ENCODE measurements at regions of chr4 and their contacts with region 1.

Region 1: GRCh38 chr4:242121-242848 is 63.0 kb downstream of the ZNF732 start:
- DNase-seq: peak; percentile 40 to 88 (median 59)
- ATAC-seq: peak; percentile 95
- H3K4me3 ChIP-seq: peak overlapping the region; percentile 54
- H3K4me3 Mint-ChIP-seq: peak overlapping the region; percentile 89
- H3K27ac ChIP-seq: peak overlapping the region in 1 of 2 donors; percentile 29
- H3K27ac Mint-ChIP-seq: peak overlapping the region; percentile 54
- H3K4me1 ChIP-seq: peaks cover 6% of the 10 kb centered on the region
- H3K4me1 Mint-ChIP-seq: peaks cover 11% of the 10 kb centered on the region
- H3K27me3 ChIP-seq: no peaks in the 10 kb centered on the region
- H3K27me3 Mint-ChIP-seq: no peaks in the 10 kb centered on the region
- CTCF ChIP-seq: peak; percentile 91

Region 2: DNA sequence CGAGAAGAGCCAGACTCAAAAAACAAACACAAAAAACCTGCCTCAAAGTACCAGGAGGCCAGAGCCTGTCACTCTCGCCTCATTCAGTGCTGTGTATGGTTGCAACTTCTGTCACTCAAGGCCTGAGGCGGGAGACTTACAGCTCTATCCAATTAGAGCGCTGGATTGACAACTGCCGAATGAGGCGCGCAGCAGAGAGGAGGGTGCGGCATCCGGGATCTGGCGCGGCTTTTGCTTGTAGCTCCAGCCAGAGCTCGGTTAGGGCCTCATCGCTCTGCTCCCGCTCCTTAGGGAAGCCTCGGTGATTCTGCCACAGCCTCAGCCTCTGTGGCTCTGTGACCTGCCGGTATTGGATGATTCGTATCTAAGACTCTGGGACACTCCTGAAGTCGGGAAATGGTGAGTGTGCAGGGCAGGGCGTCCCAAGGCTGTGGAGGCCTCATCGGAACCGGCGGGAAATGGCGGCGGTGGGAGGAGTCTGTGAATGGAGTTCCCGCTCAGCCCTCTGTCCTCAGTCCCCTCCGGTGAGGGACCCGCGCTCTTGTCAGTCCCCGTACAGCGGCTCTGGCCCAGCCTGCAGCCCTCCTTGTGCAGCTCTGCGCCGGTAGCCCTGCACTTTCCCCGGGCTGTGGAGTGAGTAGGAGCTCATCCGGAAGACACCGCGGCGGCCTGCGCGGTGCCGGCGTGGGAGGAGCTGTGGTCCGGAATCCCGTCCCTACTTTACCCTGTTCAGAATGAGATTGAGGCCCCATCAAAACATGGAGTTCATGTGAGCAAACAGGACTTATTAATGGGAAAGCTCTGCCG is 117.8 kb before region 1 on chr4 and contains the start of gene ZNF718:
- CTCF ChIA-PET with region 1: no interaction called
- POLR2A ChIA-PET with region 1: interaction called, 10 read pairs
- intact Hi-C with region 1: loop called in 1 of 2 experiments (anchors 2 kb)
- DNase-seq: peak; percentile 77 to 96 (median 87)
- ATAC-seq: peak; percentile 94
- H3K4me3 ChIP-seq: peak within 1 kb of the TSS; percentile 90
- H3K4me3 Mint-ChIP-seq: peak within 1 kb of the TSS; percentile 99
- H3K27ac ChIP-seq: peak within 1 kb of the TSS; percentile 79 to 88
- H3K27ac Mint-ChIP-seq: peak within 1 kb of the TSS; percentile 98
- H3K4me1 ChIP-seq: peaks cover 48% of the 10 kb centered on the region
- H3K4me1 Mint-ChIP-seq: peaks cover 57% of the 10 kb centered on the region
- H3K27me3 ChIP-seq: no peaks in the 10 kb centered on the region
- H3K27me3 Mint-ChIP-seq: no peaks in the 10 kb centered on the region
- CTCF ChIP-seq: no peak
- total RNA-seq, gene ZNF718: 6.3 to 7.4 TPM

Region 3: DNA sequence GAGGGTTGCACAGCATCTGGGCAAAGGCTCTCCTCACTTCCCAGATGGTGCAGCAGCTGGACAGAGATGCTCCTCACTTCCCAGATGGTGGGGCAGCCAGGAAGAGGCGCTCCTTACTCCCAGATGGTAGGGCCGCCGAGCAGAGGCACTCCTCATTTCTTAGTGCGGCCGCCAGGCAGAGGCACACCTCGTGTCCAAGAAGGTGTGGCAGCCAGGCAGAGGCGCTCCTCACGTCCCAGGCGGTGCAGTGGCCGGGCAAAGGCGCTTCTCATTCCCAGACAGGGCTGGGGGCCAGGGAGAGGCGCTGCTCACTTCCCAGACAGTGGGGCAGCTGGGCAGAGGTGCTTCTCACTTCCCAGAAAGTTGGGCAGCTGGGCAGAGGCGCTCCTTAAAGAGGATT is 14.2 kb after region 1 on chr4:
- CTCF ChIA-PET with region 1: no interaction called
- POLR2A ChIA-PET with region 1: no interaction called
- intact Hi-C with region 1: no loop called
- DNase-seq: no peak
- ATAC-seq: no peak
- H3K4me3 ChIP-seq: no peak overlapping the region
- H3K4me3 Mint-ChIP-seq: no peak overlapping the region
- H3K27ac ChIP-seq: no peak overlapping the region
- H3K27ac Mint-ChIP-seq: no peak overlapping the region
- H3K4me1 ChIP-seq: no peaks in the 10 kb centered on the region
- H3K4me1 Mint-ChIP-seq: no peaks in the 10 kb centered on the region
- H3K27me3 ChIP-seq: no peaks in the 10 kb centered on the region
- H3K27me3 Mint-ChIP-seq: no peaks in the 10 kb centered on the region
- CTCF ChIP-seq: no peak

Region 4: DNA sequence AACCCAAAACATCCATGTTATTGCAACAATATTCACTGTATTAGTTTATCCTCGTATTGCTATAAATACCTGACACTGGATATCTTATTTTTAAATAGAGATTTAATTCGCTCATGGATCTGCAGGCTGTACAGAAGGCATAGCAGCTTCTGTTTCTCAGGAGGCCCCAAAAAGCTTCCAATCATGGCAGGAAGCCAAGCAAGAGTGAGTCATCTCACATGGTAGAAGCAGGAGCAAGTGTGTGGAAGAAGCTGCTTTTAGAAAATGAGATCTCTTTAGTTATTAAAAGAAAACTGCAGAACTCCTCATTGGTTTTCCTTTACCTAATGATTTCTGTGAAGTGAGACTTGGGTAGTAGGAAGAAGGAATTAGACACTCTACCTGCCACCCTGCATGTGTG is 46.6 kb after region 1 on chr4:
- CTCF ChIA-PET with region 1: no interaction called
- POLR2A ChIA-PET with region 1: no interaction called
- intact Hi-C with region 1: no loop called
- DNase-seq: no peak
- ATAC-seq: no peak
- H3K4me3 ChIP-seq: no peak overlapping the region
- H3K4me3 Mint-ChIP-seq: no peak overlapping the region
- H3K27ac ChIP-seq: no peak overlapping the region
- H3K27ac Mint-ChIP-seq: no peak overlapping the region
- H3K4me1 ChIP-seq: no peaks in the 10 kb centered on the region
- H3K4me1 Mint-ChIP-seq: no peaks in the 10 kb centered on the region
- H3K27me3 ChIP-seq: no peaks in the 10 kb centered on the region
- H3K27me3 Mint-ChIP-seq: peaks cover 6% of the 10 kb centered on the region
- CTCF ChIP-seq: no peak

Region 5: GRCh38 chr4:498328-498904 is 256.1 kb after region 1 on chr4:
- CTCF ChIA-PET with region 1: no interaction called
- POLR2A ChIA-PET with region 1: no interaction called
- intact Hi-C with region 1: loop called in 1 of 2 experiments (anchors 10 kb)
- DNase-seq: peak in 2 of 14 experiments; percentile 39 to 51
- ATAC-seq: peak; percentile 45
- H3K4me3 ChIP-seq: peak overlapping the region; percentile 85
- H3K4me3 Mint-ChIP-seq: peak overlapping the region; percentile 92
- H3K27ac ChIP-seq: peak overlapping the region; percentile 76 to 87
- H3K27ac Mint-ChIP-seq: peak overlapping the region; percentile 91
- H3K4me1 ChIP-seq: peaks cover 28% of the 10 kb centered on the region
- H3K4me1 Mint-ChIP-seq: peaks cover 49% of the 10 kb centered on the region
- H3K27me3 ChIP-seq: no peaks in the 10 kb centered on the region
- H3K27me3 Mint-ChIP-seq: no peaks in the 10 kb centered on the region
- CTCF ChIP-seq: no peak

Region 6: GRCh38 chr4:742742-743311 is 500.5 kb after region 1 on chr4:
- CTCF ChIA-PET with region 1: interaction called, 3 read pairs
- POLR2A ChIA-PET with region 1: no interaction called
- intact Hi-C with region 1: loop called in 1 of 2 experiments (anchors 10 kb)
- DNase-seq: peak; percentile 62 to 84 (median 74)
- ATAC-seq: peak; percentile 83
- H3K4me3 ChIP-seq: no peak overlapping the region
- H3K4me3 Mint-ChIP-seq: no peak overlapping the region
- H3K27ac ChIP-seq: no peak overlapping the region
- H3K27ac Mint-ChIP-seq: no peak overlapping the region
- H3K4me1 ChIP-seq: peaks cover 6% of the 10 kb centered on the region
- H3K4me1 Mint-ChIP-seq: no peaks in the 10 kb centered on the region
- H3K27me3 ChIP-seq: no peaks in the 10 kb centered on the region
- H3K27me3 Mint-ChIP-seq: no peaks in the 10 kb centered on the region
- CTCF ChIP-seq: peak; percentile 88

Region 7: GRCh38 chr4:986879-987623 is 744.8 kb after region 1 on chr4 and contains the start of gene IDUA:
- CTCF ChIA-PET with region 1: no interaction called
- POLR2A ChIA-PET with region 1: no interaction called
- intact Hi-C with region 1: loop called (anchors 10 kb)
- DNase-seq: peak; percentile 73 to 93 (median 86)
- ATAC-seq: peak; percentile 84
- H3K4me3 ChIP-seq: peak within 1 kb of the TSS; percentile 78
- H3K4me3 Mint-ChIP-seq: peak within 1 kb of the TSS; percentile 94
- H3K27ac ChIP-seq: peak within 1 kb of the TSS; percentile 41 to 46
- H3K27ac Mint-ChIP-seq: peak within 1 kb of the TSS; percentile 82
- H3K4me1 ChIP-seq: peaks cover 36% of the 10 kb centered on the region
- H3K4me1 Mint-ChIP-seq: peaks cover 25% of the 10 kb centered on the region
- H3K27me3 ChIP-seq: no peaks in the 10 kb centered on the region
- H3K27me3 Mint-ChIP-seq: no peaks in the 10 kb centered on the region
- CTCF ChIP-seq: peak; percentile 57
- total RNA-seq, gene IDUA: 70.2 to 77.8 TPM

Region 8: DNA sequence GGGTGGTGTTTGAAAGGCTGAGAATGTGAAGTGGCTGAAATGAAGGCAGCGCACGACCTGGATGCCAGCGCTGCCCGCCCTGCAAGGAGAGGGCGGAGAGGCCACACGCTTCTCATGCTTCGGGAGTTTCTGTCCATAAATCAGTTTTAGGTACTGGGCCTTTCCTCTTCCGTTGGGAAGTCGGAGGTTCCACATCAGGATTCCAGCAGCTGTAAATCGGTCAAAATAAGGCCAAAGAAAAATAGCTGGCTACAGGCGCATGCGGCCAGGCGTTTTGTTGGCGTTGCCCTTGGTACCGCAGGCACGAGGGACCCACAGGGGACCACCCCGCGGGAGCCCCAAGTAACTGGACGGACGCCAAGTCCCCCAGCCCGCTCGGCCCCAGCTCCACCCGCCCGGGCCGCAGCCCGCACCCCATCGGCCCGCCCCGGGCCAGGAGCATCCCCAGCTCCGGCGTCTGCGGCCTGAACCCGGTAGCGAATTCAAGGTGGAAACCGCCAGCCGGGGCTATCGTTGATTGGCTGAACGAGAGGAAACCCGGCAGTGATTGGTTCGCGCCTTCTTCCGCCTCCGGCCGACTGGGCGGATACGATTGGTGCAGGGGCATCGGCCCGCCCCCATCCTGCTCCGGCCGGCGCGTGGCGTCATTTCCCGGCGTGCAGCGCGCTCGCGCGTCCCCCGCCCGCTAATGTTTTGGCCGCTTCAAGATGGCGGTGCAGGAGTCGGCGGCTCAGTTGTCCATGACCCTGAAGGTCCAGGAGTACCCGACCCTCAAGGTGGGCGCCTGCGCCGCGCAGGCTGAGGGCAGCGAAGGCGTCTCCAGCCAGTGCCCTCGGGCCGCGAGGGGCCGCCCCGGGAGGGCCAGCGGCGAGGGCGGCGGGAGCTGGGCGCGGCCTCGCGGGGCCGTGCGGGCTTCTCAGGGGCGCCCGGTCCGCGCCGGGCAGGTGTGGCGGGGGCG is 1047.2 kb after region 1 on chr4 and contains the start of gene MAEA:
- CTCF ChIA-PET with region 1: no interaction called
- POLR2A ChIA-PET with region 1: no interaction called
- intact Hi-C with region 1: loop called in 1 of 2 experiments (anchors 10 kb)
- DNase-seq: peak; percentile 94 to 98 (median 96)
- ATAC-seq: peak; percentile 99
- H3K4me3 ChIP-seq: peak within 1 kb of the TSS; percentile 73
- H3K4me3 Mint-ChIP-seq: peak within 1 kb of the TSS; percentile 93
- H3K27ac ChIP-seq: peak within 1 kb of the TSS; percentile 60 to 83
- H3K27ac Mint-ChIP-seq: peak within 1 kb of the TSS; percentile 93
- H3K4me1 ChIP-seq: peaks cover 46% of the 10 kb centered on the region
- H3K4me1 Mint-ChIP-seq: peaks cover 45% of the 10 kb centered on the region
- H3K27me3 ChIP-seq: no peaks in the 10 kb centered on the region
- H3K27me3 Mint-ChIP-seq: no peaks in the 10 kb centered on the region
- CTCF ChIP-seq: no peak
- total RNA-seq, gene MAEA: 61.5 to 63.2 TPM

Region 9: GRCh38 chr4:1721004-1721665 is 1478.8 kb after region 1 on chr4 and contains the starts of genes TACC3 and TMEM129:
- CTCF ChIA-PET with region 1: no interaction called
- POLR2A ChIA-PET with region 1: no interaction called
- intact Hi-C with region 1: no loop called
- DNase-seq: peak; percentile 90 to 99 (median 95)
- ATAC-seq: peak; percentile 80
- H3K4me3 ChIP-seq: peak within 1 kb of the TSS; percentile 53
- H3K4me3 Mint-ChIP-seq: peak within 1 kb of the TSS; percentile 92
- H3K27ac ChIP-seq: peak within 1 kb of the TSS; percentile 85 to 88
- H3K27ac Mint-ChIP-seq: peak within 1 kb of the TSS; percentile 99
- H3K4me1 ChIP-seq: peaks cover 77% of the 10 kb centered on the region
- H3K4me1 Mint-ChIP-seq: peaks cover 56% of the 10 kb centered on the region
- H3K27me3 ChIP-seq: no peaks in the 10 kb centered on the region
- H3K27me3 Mint-ChIP-seq: no peaks in the 10 kb centered on the region
- CTCF ChIP-seq: no peak
- total RNA-seq, gene TACC3: 123 TPM
- total RNA-seq, gene TMEM129: 17.2 to 17.6 TPM

Region 10: GRCh38 chr4:2024683-2025082 is 1782.4 kb after region 1 on chr4:
- CTCF ChIA-PET with region 1: no interaction called
- POLR2A ChIA-PET with region 1: no interaction called
- intact Hi-C with region 1: no loop called
- DNase-seq: no peak
- ATAC-seq: no peak
- H3K4me3 ChIP-seq: no peak overlapping the region
- H3K4me3 Mint-ChIP-seq: no peak overlapping the region
- H3K27ac ChIP-seq: no peak overlapping the region
- H3K27ac Mint-ChIP-seq: no peak overlapping the region
- H3K4me1 ChIP-seq: no peaks in the 10 kb centered on the region
- H3K4me1 Mint-ChIP-seq: no peaks in the 10 kb centered on the region
- H3K27me3 ChIP-seq: peaks cover 7 to 37% of the 10 kb centered on the region in 2 experiments
- H3K27me3 Mint-ChIP-seq: peaks cover 51% of the 10 kb centered on the region
- CTCF ChIP-seq: no peak

Measured in CD4-positive, alpha-beta T cell (primary cell).